HEK293 (cell line): ENCODE measurements at regions of chr4 and their contacts with region 1.

Region 1: DNA sequence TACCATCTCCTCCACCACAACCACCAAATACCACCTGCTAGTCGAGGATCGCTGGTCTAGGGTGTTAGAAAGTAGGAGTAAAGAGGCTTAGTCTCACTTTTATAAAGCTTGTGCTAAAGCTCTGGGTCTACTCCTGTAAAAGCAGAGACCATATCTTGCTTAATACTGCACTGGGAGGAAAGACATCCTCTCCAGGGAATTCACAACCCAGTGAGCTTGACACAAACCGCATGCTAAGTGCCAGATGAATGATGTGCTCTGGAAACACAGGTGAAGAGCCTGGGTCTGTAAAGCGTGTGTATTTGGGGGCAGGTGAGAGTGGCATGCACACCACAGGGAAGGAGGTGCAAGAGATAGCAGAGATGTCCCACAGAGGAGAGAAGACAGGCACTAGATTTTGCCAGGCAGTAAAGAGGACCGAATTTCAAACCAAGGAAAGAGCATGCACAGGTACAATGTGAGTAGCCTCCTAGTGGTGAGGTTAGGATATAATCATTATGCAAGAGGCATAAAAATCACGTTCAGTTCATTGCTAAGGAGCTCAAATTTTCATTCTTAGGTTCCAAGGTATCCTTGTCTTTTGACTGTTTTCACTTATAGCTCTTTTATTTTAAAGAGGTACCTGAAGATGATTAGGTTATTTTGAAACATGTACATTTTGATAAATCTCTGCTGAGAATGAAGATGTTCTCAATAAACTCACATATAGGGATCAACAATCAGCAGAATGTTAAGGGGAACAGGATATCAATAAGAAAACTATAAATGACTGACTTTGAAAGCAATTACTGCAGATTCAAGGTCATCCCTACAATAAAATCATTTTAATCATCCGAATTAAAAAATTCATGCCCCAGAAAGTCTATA is 20.7 kb downstream of the TAPT1 start:
- H3K4me3 ChIP-seq: no peak overlapping the region
- H3K27ac ChIP-seq: no peak overlapping the region
- H3K4me1 ChIP-seq: no peaks in the 10 kb centered on the region
- CTCF ChIP-seq: no peak; the same call in 1 of the 2 replicates

Region 2: GRCh38 chr4:16026160-16026761 is 179.3 kb before region 1 on chr4:
- CTCF ChIA-PET with region 1: interaction called, 21 read pairs
- POLR2A ChIA-PET with region 1: no interaction called
- H3K4me3 ChIP-seq: no peak overlapping the region
- H3K27ac ChIP-seq: no peak overlapping the region
- H3K4me1 ChIP-seq: no peaks in the 10 kb centered on the region
- CTCF ChIP-seq: peak; percentile 23; the same call in 1 of the 2 replicates

Region 3: DNA sequence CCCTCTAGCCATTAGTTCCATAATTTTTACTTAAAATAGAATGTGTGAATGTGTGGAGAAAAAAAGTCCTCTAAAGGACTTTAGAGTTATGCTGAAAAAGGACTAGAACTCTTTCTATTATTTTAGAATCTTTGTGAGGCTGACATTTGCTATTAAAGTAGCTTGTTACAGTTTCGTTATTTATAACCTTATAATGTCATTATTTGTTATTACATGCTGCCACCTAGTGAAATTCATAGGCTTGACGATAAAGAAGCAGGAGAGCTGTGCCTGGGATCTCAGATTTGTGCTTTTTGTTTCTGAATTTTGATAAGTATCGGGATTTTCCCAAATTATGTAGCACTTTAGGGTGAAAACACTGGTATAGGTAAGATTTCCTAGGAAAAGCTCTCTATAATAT is 59.3 kb after region 1 on chr4:
- CTCF ChIA-PET with region 1: interaction called, 11 read pairs
- POLR2A ChIA-PET with region 1: no interaction called
- H3K4me3 ChIP-seq: no peak overlapping the region
- H3K27ac ChIP-seq: no peak overlapping the region
- H3K4me1 ChIP-seq: no peaks in the 10 kb centered on the region
- CTCF ChIP-seq: no peak